Right cardiac atrium (tissue), 5 donors: ENCODE measurements at regions of chr15 and their contacts with region 1.

Region 1: GRCh38 chr15:84658080-84658787 is at the start of gene NMB:
- DNase-seq: peak; percentile 81 to 91 (median 90)
- ATAC-seq: peak; percentile 70 to 75
- H3K4me3 ChIP-seq: peak within 1 kb of the TSS; percentile 65
- H3K27ac ChIP-seq: peak within 1 kb of the TSS; percentile 70
- H3K4me1 ChIP-seq: peaks cover 14% of the 10 kb centered on the region
- H3K27me3 ChIP-seq: no peaks in the 10 kb centered on the region
- total RNA-seq, gene NMB: 0.96 to 4.7 (median 2.1) TPM

Region 2: DNA sequence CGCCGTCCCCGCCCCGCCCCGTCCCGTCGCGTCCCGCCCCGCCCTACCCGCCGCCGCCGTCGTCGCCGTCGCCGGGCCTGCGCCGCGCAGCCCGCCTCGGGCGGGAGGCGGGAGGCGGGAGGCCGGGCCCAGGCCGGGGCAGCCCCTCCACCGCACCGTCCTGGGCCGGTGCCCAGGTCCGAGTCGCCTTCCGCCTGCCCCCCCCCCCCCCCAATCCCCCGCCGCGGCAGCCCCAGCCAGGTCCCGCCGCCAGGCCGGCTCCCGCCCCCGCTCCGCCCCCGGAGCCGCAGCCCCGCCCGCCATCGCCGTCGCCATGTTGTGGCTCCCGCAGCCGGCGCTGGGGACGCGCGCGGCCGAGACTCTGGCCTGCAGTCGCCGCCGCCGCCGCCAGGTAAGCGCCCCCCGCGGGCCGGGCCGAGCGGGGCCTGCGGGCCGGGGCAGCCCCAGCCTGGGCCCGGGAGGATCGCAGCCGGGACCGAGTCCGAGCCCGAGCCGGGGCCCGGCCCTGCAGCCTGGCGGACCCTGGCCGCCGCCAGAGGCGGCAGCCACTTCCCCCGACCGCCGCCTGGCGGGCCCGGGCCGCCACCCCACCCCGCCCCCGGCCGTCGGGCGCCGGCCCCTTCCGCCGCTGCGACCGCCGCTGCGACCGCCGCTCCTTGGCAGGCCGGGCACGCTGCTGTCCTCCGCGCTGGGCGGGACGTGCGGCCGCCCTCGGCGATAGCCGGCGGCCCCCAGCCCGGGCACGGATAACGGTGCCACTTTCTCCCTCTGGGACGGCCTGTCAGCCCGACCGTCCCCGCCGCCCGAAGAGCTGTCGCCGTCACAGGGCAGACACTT is 90.3 kb after region 1 on chr15 and contains the start of gene ZNF592:
- intact Hi-C with region 1: loop called in 1 of 4 experiments (anchors 10 kb)
- DNase-seq: peak; percentile 89 to 96 (median 94)
- ATAC-seq: peak; percentile 78 to 84
- H3K4me3 ChIP-seq: peak within 1 kb of the TSS; percentile 98
- H3K27ac ChIP-seq: peak within 1 kb of the TSS; percentile 96
- H3K4me1 ChIP-seq: peaks cover 5% of the 10 kb centered on the region
- H3K27me3 ChIP-seq: no peaks in the 10 kb centered on the region
- total RNA-seq, gene ZNF592: 20.3 to 25.6 (median 20.6) TPM

Region 3: DNA sequence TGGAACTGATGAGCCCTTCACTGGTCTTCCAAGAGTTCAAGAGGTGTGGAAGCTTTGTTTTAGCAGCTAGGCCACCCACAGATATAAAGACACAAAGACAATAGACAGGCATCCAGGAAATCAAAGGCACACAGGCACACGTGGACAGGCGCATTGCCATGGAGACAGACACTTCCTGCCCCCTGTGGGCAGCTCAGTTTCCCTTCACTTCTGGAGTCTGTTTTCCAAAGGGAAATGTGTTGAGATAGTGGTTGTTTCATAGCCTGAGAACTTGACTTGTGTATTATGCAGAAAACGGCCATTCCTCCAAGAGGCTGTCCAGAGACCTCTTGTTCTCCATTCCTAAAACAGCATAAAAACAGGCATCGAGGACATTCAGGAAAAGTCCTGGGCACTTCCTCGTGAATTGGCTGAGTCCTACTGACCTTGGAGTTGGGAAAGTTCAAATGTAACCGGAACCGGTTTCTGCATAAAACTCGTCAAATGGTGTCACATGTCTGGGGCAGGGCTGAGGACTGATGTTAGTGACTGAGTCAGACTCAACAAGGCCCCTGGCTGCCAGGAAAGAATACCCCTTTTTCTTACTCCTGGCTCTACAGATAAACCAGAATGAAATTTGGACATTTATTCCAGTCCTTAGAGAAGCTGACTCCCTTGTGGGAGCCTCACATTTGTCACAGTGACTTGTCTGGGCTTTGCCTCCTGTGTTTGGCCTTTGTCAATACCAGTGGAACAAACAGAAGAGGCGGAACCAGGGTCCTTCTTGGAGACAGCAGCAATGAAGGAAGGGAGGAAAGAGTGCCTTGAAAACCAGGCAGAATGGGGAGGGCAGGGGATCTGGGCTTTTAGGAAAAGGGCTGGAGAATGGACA is 160.3 kb after region 1 on chr15:
- intact Hi-C with region 1: loop called in 2 of 4 experiments (anchors 10 kb)
- DNase-seq: peak in 2 of 3 donors; percentile 67 to 72
- ATAC-seq: peak; percentile 18 to 60
- H3K4me3 ChIP-seq: peak overlapping the region; percentile 67
- H3K27ac ChIP-seq: peak overlapping the region; percentile 95
- H3K4me1 ChIP-seq: peaks cover 38% of the 10 kb centered on the region
- H3K27me3 ChIP-seq: no peaks in the 10 kb centered on the region

Region 4: DNA sequence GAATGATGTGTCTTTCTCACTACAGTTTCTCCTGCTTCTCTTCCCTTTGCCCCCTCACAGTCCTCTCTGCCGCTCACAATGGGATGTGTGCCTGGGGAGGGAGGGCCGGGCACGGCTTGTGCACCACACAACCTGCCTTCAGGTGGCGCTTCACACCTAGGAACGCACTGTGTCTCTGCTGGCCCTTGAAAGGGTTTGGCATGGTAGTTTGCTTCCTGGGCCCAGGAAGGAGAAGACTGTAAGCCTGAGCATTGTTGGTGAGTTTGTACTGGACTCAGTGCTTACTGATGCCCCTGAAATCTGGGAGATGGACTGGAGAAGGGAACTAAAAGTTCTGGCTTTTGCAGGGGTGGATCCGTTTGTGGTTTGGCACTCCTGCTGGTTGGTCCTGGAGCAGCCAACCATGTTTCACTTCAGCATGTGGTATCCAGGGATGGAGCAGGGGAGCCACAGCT is 168.2 kb after region 1 on chr15:
- intact Hi-C with region 1: loop called in 1 of 4 experiments (anchors 10 kb)
- DNase-seq: peak in 2 of 3 donors; percentile 47 to 78
- ATAC-seq: peak; percentile 4 to 22
- H3K4me3 ChIP-seq: no peak overlapping the region
- H3K27ac ChIP-seq: peak overlapping the region; percentile 32
- H3K4me1 ChIP-seq: peaks cover 34% of the 10 kb centered on the region
- H3K27me3 ChIP-seq: no peaks in the 10 kb centered on the region

Region 5: DNA sequence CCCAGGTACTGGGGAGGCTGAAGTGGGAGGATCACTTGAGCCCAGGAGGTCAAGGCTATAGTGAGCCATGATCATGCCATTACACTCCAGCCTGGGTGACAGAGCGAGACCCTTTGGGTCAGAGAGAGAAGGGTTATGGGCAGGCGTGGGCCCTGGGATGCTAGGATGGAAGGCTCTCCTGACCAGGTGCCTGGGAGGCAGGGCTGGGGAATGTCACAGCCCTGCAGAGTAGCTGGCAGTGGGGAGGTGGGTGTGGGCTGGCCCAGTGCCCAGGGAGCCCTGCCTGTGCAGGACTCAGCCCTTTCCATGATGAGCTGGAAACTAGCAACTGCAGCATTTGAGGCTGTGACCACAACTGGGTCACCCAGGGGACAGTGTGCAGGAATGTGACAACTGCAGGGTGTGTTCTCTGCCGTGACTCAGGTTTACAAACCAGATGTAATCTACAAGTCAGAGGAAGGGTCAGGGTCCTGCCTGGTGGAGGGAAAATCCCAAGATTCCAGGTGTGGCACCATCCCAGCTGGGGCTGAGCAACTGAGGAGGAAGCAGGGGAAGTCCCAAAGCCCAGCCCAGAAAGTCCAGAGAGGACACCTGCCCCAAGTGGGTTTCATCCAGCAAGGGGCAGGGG is 271.6 kb after region 1 on chr15:
- intact Hi-C with region 1: loop called in 1 of 4 experiments (anchors 10 kb)
- DNase-seq: no peak
- ATAC-seq: no peak
- H3K4me3 ChIP-seq: no peak overlapping the region
- H3K27ac ChIP-seq: no peak overlapping the region
- H3K4me1 ChIP-seq: peaks cover 4% of the 10 kb centered on the region
- H3K27me3 ChIP-seq: no peaks in the 10 kb centered on the region

Region 6: GRCh38 chr15:85125056-85125661 is 466.9 kb after region 1 on chr15:
- intact Hi-C with region 1: no loop called
- DNase-seq: no peak
- ATAC-seq: peak in 1 of 2 donors; percentile 29
- H3K4me3 ChIP-seq: no peak overlapping the region
- H3K27ac ChIP-seq: no peak overlapping the region
- H3K4me1 ChIP-seq: peaks cover 2% of the 10 kb centered on the region
- H3K27me3 ChIP-seq: no peaks in the 10 kb centered on the region